Activated T-helper 2 cell treated with anti-CD3 and anti-CD28 coated beads, Interferon-gamma antibody, Interleukin-2, Interleukin-4, amounts not matched to agents 10 μg/mL and 5 μg/mL and 100 μg/mL, durations not matched to agents 14 hours and 24 hours and 36 hours (primary cell): ENCODE measurements at regions of chr11 and their contacts with region 1.

Region 1: GRCh38 chr11:112086422-112087191 is at the starts of genes SDHD and TIMM8B:
- DNase-seq: peak; percentile 96
- H3K4me3 Mint-ChIP-seq: peak within 1 kb of the TSS; percentile 99
- H3K27ac Mint-ChIP-seq: peak within 1 kb of the TSS; percentile 91
- H3K4me1 Mint-ChIP-seq: peaks cover 53% of the 10 kb centered on the region
- H3K27me3 Mint-ChIP-seq: no peaks in the 10 kb centered on the region
- total RNA-seq, gene SDHD: 81.7 and 91.0 TPM in 2 replicates
- total RNA-seq, gene TIMM8B: 72.6 and 77.5 TPM in 2 replicates

Region 2: GRCh38 chr11:111870886-111871692 is 215.5 kb before region 1 on chr11 and contains the start of gene ALG9:
- intact Hi-C with region 1: loop called (anchors 2 kb)
- DNase-seq: peak; percentile 87
- H3K4me3 Mint-ChIP-seq: peak within 1 kb of the TSS; percentile 91
- H3K27ac Mint-ChIP-seq: peak within 1 kb of the TSS; percentile 85
- H3K4me1 Mint-ChIP-seq: peaks cover 28% of the 10 kb centered on the region
- H3K27me3 Mint-ChIP-seq: no peaks in the 10 kb centered on the region
- total RNA-seq, gene ALG9: 33.4 and 39.5 TPM in 2 replicates

Region 3: DNA sequence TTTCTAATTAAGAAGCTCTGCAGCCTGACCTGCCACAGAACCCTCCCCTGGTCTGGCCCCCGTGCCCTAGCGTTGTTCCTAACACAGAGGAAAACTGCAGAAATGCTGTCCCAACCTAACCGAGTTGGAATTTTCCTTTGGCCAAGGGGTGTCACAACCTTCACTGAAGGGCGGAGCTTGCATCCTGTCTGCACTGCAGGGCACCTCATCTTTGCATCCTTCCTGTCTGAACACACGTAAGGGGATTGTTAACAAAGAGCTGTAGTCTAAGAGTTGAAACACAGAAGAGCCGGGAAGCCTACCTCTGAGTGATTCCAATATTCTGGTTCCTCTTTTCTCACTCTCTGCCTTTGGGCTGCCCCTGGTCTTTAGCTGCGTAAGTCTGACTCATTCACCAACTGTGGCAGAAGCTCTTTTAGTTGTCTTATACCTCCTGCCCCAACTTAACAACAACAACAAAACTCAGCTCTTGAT is 147.9 kb before region 1 on chr11:
- intact Hi-C with region 1: loop called (anchors 5 kb)
- DNase-seq: no peak
- H3K4me3 Mint-ChIP-seq: peak overlapping the region; percentile 89
- H3K27ac Mint-ChIP-seq: peak overlapping the region; percentile 95
- H3K4me1 Mint-ChIP-seq: peaks cover 60% of the 10 kb centered on the region
- H3K27me3 Mint-ChIP-seq: no peaks in the 10 kb centered on the region

Region 4: DNA sequence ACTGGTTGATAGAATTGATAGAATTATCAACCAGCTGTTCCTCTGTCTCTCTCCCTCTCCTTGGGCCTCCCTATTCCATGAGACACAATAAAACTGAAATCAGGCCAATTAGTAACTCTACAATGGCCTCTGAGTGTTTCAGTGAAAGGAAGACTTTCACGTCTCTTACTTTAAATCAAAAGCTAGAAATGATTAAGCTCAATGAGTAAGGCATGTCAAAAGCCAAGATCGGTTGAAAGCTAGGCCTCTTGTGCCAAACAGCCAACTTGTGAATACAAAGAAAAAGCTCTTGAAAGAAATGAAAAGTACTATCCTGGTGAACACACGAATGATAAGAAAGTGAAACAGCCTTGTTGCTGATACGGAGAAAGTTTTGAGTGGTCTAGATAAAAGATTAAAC is 29.4 kb before region 1 on chr11:
- intact Hi-C with region 1: loop called (anchors 1 kb)
- DNase-seq: no peak
- H3K4me3 Mint-ChIP-seq: peak overlapping the region; percentile 11
- H3K27ac Mint-ChIP-seq: peak overlapping the region; percentile 80
- H3K4me1 Mint-ChIP-seq: peaks cover 21% of the 10 kb centered on the region
- H3K27me3 Mint-ChIP-seq: no peaks in the 10 kb centered on the region

Region 5: DNA sequence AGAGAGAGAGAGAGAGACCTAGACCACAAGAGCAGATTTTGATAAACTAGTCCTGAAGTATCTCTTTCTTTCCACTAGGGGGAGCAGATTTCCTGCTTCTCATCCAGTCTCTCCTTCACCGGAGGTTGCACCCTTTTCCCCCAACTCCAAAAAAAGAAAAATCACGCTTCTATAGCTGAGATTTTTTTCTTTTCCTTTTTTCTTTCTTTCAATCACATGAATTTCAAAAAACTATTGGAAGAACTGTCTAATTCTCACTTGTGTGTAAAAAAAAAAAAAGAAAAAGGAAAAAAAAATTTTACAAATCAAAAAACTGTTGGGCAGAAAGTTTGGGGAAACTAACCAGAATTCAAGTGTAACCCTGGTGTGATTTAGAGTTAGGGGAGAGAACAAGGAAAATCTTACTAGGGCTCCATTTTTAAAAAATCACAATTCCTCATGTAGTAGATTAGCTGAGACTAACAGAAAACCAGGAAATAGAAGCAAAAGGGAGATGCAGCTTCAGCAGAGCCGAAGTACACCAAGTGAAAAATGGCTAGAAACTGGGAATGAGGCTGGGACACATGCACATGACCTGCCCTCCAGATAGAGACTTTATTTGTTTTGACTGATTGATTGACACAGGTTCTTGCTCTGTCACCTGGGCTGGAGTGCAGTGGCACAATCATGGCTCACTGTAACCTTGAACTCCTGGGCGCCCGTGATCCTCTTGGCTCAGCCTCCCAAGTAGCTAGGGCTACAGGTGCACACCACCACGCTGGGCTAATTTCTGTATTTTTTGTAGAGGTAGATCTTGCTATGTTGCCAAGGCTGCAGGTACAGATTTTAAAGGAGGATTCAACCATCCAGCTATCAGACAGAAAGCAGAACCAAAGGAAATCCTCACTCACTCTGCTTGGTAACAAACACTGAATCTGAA is 27.2 kb after region 1 on chr11:
- intact Hi-C with region 1: no loop called
- DNase-seq: no peak
- H3K4me3 Mint-ChIP-seq: no peak overlapping the region
- H3K27ac Mint-ChIP-seq: no peak overlapping the region
- H3K4me1 Mint-ChIP-seq: peaks cover 9% of the 10 kb centered on the region
- H3K27me3 Mint-ChIP-seq: no peaks in the 10 kb centered on the region

Region 6: GRCh38 chr11:112150517-112150916 is 63.9 kb after region 1 on chr11:
- intact Hi-C with region 1: no loop called
- DNase-seq: no peak
- H3K4me3 Mint-ChIP-seq: no peak overlapping the region
- H3K27ac Mint-ChIP-seq: no peak overlapping the region
- H3K4me1 Mint-ChIP-seq: no peaks in the 10 kb centered on the region
- H3K27me3 Mint-ChIP-seq: no peaks in the 10 kb centered on the region